ENCODE measurements at regions of chr15 and their contacts with region 1.

Region 1: DNA sequence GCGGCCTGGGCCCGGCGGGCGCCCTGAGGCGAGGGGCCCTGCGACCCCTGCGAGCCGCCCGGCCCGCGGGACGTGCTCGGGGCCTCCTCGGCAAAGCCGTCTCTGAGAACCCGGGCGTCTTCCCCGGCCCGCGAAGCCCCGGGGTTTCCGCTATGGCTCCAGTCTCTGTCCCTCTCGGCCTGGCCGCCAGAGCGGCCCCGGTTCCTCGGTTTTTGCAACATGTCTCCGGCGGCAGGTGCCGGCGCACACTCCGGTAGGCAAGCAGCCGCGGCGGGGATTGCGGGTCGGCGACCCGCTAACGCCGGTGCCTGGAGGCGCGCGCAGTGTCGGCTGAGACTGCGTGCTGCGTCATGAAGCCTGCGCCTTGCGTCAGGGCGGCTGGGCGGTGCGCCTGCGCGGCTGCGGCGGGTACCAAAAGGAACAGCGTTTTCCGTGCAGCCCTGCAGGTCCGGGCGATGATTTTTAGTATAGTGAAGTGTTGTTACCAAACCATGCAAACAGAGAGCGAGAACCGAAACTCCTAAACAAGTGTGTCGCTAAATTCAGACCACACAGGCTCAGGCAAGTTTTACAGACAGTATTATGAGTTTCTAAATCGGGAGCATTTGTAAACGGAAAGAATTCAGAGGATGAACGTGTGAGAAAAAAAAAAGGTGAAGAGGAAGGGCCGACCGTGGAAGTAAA is at the start of gene NSMCE3:
- DNase-seq: peak; percentile 85 to 96 (median 92)
- H3K4me3 ChIP-seq: peak within 1 kb of the TSS; percentile 31 to 86 (median 70)
- H3K27ac ChIP-seq: peak within 1 kb of the TSS; percentile 79 to 94 (median 88)
- H3K4me1 ChIP-seq: peaks cover 8 to 32% of the 10 kb centered on the region in 2 donors
- H3K27me3 ChIP-seq: no peaks in the 10 kb centered on the region
- CTCF ChIP-seq: peak in 1 of 6 experiments; percentile 5
- POLR2A ChIP-seq: peak; percentile 93
- total RNA-seq, gene NSMCE3: 8.0 to 16.9 (median 13.6) TPM

Region 2: GRCh38 chr15:29312387-29312786 is 42.8 kb after region 1 on chr15:
- intact Hi-C with region 1: no loop called
- DNase-seq: no peak
- H3K4me3 ChIP-seq: no peak overlapping the region
- H3K27ac ChIP-seq: no peak overlapping the region
- H3K4me1 ChIP-seq: no peaks in the 10 kb centered on the region
- H3K27me3 ChIP-seq: no peaks in the 10 kb centered on the region
- CTCF ChIP-seq: no peak
- POLR2A ChIP-seq: no peak

Region 3: DNA sequence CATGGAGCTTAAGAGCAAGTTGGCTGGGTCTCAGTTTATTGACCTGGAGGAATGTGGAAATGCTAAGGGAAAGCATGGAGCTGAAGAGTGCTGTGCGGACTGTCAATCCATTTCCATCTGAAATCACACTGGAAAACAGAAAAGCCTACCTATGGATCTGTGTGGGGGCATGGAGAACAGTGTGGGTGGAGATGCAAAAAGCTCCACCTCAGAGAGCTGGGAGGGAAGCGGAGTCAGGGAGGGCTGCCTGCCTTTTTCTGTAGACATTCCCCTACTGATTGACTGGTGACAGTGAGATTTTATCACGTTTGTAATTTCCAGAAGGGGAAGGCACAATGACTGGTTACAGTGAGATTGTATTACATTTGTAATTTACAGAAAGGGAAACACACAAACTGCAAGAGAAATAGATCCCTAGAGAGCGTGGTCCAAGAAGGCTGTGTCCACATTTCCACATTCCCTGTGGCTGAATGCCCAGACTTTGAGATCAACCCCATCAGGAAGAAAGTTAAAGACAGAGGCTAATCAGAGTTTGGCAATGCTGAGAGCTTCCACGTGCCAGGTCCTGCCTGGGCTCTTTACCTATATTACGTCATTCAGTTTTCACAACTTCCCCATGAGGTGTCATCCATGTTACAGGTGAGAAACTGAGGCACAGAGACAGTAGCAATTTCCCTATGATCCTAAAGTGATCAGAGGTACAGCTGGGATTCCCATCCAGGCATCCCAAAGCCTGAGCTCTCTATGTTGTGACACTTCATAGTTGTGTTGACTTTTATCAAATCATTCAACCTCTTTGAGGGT is 67.7 kb after region 1 on chr15:
- intact Hi-C with region 1: loop called in 1 of 2 experiments (anchors 10 kb)
- DNase-seq: peak in 2 of 7 donors; percentile 14 to 17
- H3K4me3 ChIP-seq: no peak overlapping the region
- H3K27ac ChIP-seq: no peak overlapping the region
- H3K4me1 ChIP-seq: no peaks in the 10 kb centered on the region
- H3K27me3 ChIP-seq: no peaks in the 10 kb centered on the region
- CTCF ChIP-seq: no peak
- POLR2A ChIP-seq: no peak

Region 4: GRCh38 chr15:29348336-29348914 is 78.8 kb after region 1 on chr15:
- intact Hi-C with region 1: no loop called
- DNase-seq: peak in 3 of 7 donors; percentile 7 to 33 (median 19)
- H3K4me3 ChIP-seq: no peak overlapping the region
- H3K27ac ChIP-seq: no peak overlapping the region
- H3K4me1 ChIP-seq: no peaks in the 10 kb centered on the region
- H3K27me3 ChIP-seq: no peaks in the 10 kb centered on the region
- CTCF ChIP-seq: no peak
- POLR2A ChIP-seq: no peak

Region 5: DNA sequence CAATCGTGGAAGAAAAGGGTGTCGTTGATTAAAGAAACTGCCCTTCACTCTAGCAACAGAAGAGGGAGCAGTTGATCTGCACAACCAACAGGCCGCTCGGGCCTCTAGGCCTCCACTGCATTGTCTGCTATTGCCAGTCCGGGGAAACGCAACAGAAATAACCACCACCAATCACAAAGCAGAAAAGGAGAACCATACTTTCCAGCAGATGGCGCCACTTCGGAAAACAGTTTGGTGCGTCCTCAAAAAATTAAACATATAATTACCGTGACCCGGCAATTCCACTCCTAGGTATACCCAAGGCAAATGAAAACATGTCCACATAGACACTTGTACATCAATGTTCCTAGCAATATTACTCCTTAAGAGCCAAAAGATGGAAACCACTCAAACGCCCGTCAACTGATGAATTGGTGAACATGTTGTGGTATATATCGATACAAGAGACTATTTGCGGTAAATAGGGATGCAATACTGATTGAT is 398.5 kb after region 1 on chr15:
- intact Hi-C with region 1: loop called in 1 of 2 experiments (anchors 10 kb)
- DNase-seq: peak; percentile 64 to 88 (median 86)
- H3K4me3 ChIP-seq: no peak overlapping the region
- H3K27ac ChIP-seq: no peak overlapping the region
- H3K4me1 ChIP-seq: no peaks in the 10 kb centered on the region
- H3K27me3 ChIP-seq: no peaks in the 10 kb centered on the region
- CTCF ChIP-seq: peak; percentile 69 to 88 (median 80)
- POLR2A ChIP-seq: no peak

Measured in adrenal gland (tissue), 19 donors.